Sciatic nerve (tissue), 2 donors: ENCODE measurements at regions of chr22 and their contacts with region 1.

Region 1: GRCh38 chr22:37077884-37078485 is 26.4 kb downstream of the KCTD17 start:
- DNase-seq: peak; percentile 74
- ATAC-seq: peak; percentile 53

Region 2: GRCh38 chr22:36865346-36865745 is 212.6 kb before region 1 on chr22:
- intact Hi-C with region 1: loop called (anchors 5 kb)
- DNase-seq: no peak
- ATAC-seq: no peak